ENCODE measurements at regions of chr17 and their contacts with region 1.

Region 1: DNA sequence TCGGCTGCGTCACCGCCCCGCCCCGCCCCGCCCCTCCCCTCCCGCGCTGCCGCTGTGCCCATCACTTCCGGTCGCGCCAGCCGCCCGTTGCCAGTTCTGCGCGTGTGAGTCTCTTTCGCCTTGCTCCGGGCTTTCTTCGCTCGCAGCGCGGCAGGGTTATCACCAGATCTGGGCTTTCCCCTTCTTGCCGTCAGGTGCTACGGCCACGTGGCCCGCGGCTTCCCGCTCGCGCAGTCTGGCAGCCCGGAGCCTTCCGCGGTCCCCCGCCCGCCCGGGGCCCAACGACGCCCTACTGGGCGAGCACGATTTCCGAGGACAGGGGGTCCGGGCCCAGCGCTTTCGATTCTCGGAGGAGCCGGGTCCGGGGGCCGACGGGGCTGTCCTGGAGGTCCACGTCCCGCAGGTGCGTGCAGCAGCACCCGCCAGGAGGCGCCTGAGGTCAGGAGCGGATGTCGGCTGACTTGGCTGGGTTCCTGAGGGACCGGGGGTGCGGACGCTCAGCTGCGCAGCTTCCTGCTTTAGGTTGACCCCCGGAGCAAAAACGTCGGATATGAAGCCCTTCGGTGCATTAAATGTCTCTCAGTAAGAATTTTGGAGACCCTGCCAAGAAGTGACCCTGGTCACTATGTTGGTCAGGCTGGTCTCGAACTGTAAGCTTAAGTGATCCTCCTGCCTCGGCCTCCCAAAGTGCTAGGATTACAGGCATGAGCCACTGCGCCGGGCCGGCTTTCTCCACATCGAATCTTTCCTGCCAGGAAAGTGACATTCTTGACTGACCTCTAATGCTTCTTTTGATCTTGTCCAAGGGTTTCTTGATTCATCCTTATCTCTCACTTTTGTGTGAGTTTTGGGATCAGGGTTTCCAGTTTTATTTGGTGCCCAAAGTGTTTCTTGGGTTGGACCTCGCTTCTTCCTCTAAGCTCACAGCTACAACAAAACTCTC is at the start of gene METTL23:
- H3K4me3 Mint-ChIP-seq: peak within 1 kb of the TSS; percentile 83
- H3K27ac Mint-ChIP-seq: peak within 1 kb of the TSS; percentile 89
- H3K4me1 Mint-ChIP-seq: peaks cover 25% of the 10 kb centered on the region
- H3K27me3 Mint-ChIP-seq: no peaks in the 10 kb centered on the region

Region 2: GRCh38 chr17:76700617-76701470 is 26.2 kb before region 1 on chr17:
- intact Hi-C with region 1: no loop called
- H3K4me3 Mint-ChIP-seq: no peak overlapping the region
- H3K27ac Mint-ChIP-seq: no peak overlapping the region
- H3K4me1 Mint-ChIP-seq: no peaks in the 10 kb centered on the region
- H3K27me3 Mint-ChIP-seq: peaks cover 2% of the 10 kb centered on the region

Region 3: GRCh38 chr17:76737082-76737675 is 10.1 kb after region 1 on chr17 and contains the start of gene SRSF2:
- intact Hi-C with region 1: loop called (anchors 1 kb)
- H3K4me3 Mint-ChIP-seq: peak within 1 kb of the TSS; percentile 92
- H3K27ac Mint-ChIP-seq: peak within 1 kb of the TSS; percentile 96
- H3K4me1 Mint-ChIP-seq: peaks cover 34% of the 10 kb centered on the region
- H3K27me3 Mint-ChIP-seq: no peaks in the 10 kb centered on the region